ENCODE measurements at regions of chr6 and their contacts with region 1.

Region 1: DNA sequence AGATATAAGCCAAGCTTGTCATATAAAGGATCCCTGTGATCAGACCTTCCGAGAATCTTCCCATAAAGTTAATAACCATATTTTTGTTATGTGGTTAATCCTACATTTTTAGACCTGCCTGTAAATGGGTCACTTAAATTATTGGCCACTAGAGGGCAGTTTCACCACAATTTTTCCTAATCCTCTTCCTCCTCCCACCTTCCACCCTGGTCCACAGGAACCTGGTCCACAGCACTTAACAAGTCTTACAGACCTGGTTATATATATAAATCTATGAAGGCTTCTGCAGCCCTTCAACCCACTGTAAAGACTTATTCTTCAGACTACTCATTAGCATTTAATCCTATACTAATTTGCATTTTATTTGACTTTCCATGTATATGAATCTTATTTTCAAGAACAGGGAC is 28.3 kb downstream of the MRS2 start:
- DNase-seq: peak; percentile 36
- H3K4me3 Mint-ChIP-seq: no peak overlapping the region
- H3K27ac Mint-ChIP-seq: no peak overlapping the region
- H3K4me1 Mint-ChIP-seq: no peaks in the 10 kb centered on the region
- H3K27me3 Mint-ChIP-seq: no peaks in the 10 kb centered on the region

Region 2: GRCh38 chr6:24344980-24345379 is 86.1 kb before region 1 on chr6:
- CTCF ChIA-PET with region 1: no interaction called
- intact Hi-C with region 1: no loop called
- DNase-seq: no peak
- H3K4me3 Mint-ChIP-seq: no peak overlapping the region
- H3K27ac Mint-ChIP-seq: no peak overlapping the region
- H3K4me1 Mint-ChIP-seq: no peaks in the 10 kb centered on the region
- H3K27me3 Mint-ChIP-seq: peaks cover 11% of the 10 kb centered on the region

Region 3: GRCh38 chr6:24440897-24441598 is 10.0 kb after region 1 on chr6:
- CTCF ChIA-PET with region 1: interaction called, 10 read pairs
- intact Hi-C with region 1: no loop called
- DNase-seq: no peak
- H3K4me3 Mint-ChIP-seq: no peak overlapping the region
- H3K27ac Mint-ChIP-seq: no peak overlapping the region
- H3K4me1 Mint-ChIP-seq: no peaks in the 10 kb centered on the region
- H3K27me3 Mint-ChIP-seq: no peaks in the 10 kb centered on the region

Region 4: DNA sequence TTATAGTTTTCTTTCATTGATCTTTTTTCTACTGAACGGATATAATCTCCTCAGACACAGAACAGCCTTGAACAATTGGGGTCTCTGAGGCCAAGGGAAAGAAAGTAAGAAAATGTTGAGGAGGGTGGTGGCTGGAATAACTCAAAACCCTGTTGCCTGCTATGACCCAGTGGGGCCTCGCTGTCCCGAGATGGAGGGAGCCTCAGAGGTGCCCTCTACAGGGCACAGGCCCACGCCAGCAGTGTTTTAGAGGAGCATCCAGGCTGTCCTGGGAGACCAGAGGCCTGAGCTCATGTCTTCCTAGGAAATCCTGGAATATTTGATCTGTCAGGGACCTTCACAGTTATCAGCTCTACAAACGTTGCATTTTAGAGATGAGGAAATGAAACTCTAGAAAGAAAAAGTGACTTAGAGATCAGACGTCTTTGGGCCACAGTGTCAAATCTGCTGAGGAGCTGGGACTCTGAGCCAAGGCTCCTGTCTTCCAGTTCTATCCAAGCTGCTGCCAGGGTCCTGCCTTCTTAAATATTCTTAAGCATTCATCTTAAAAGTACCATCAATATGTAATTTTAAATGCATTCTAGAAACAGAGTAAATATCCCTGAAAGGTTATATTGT is 90.0 kb after region 1 on chr6:
- CTCF ChIA-PET with region 1: interaction called, 21 read pairs
- intact Hi-C with region 1: loop called (anchors 1 kb)
- DNase-seq: peak; percentile 62
- H3K4me3 Mint-ChIP-seq: no peak overlapping the region
- H3K27ac Mint-ChIP-seq: no peak overlapping the region
- H3K4me1 Mint-ChIP-seq: peaks cover 8% of the 10 kb centered on the region
- H3K27me3 Mint-ChIP-seq: no peaks in the 10 kb centered on the region

Region 5: DNA sequence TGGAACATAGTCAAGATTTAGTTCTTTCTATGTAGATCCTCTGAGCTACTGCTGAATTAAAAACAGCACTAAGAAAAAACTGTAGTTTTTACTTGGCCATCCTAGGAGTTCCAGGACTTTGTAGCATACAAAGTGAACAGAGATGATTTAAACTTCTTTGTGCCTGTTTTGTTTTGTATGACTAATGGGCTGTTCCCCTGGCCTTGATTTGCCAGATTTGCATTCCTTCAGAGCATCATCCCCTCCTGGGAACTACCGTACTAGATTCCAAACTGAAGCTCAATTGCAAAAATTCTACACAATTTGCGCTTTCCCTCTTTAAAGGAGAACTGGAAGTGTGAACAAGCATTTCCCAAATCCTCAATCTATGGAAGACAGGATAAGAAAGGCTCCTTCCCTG is 258.9 kb after region 1 on chr6:
- CTCF ChIA-PET with region 1: no interaction called
- intact Hi-C with region 1: loop called (anchors 1 kb)
- DNase-seq: no peak
- H3K4me3 Mint-ChIP-seq: no peak overlapping the region
- H3K27ac Mint-ChIP-seq: no peak overlapping the region
- H3K4me1 Mint-ChIP-seq: peaks cover 22% of the 10 kb centered on the region
- H3K27me3 Mint-ChIP-seq: no peaks in the 10 kb centered on the region

Region 6: GRCh38 chr6:25851961-25852360 is 1420.9 kb after region 1 on chr6:
- CTCF ChIA-PET with region 1: no interaction called
- intact Hi-C with region 1: no loop called
- DNase-seq: no peak
- H3K4me3 Mint-ChIP-seq: no peak overlapping the region
- H3K27ac Mint-ChIP-seq: no peak overlapping the region
- H3K4me1 Mint-ChIP-seq: peaks cover 7% of the 10 kb centered on the region
- H3K27me3 Mint-ChIP-seq: peaks cover 8% of the 10 kb centered on the region